Motor neuron (in vitro differentiated cells): ENCODE measurements at regions of chr17 and their contacts with region 1.

Region 1: GRCh38 chr17:10513299-10514067 is 4.9 kb downstream of the MYH1 start:
- ATAC-seq: no peak
- H3K4me3 ChIP-seq: no peak overlapping the region
- H3K27ac ChIP-seq: no peak overlapping the region
- H3K4me1 ChIP-seq: no peaks in the 10 kb centered on the region

Region 2: GRCh38 chr17:10305398-10305797 is 208.1 kb before region 1 on chr17:
- in situ Hi-C with region 1: no loop called
- ATAC-seq: peak in 2 of 8 experiments; percentile 7 to 8
- H3K4me3 ChIP-seq: no peak overlapping the region
- H3K27ac ChIP-seq: no peak overlapping the region
- H3K4me1 ChIP-seq: no peaks in the 10 kb centered on the region

Region 3: DNA sequence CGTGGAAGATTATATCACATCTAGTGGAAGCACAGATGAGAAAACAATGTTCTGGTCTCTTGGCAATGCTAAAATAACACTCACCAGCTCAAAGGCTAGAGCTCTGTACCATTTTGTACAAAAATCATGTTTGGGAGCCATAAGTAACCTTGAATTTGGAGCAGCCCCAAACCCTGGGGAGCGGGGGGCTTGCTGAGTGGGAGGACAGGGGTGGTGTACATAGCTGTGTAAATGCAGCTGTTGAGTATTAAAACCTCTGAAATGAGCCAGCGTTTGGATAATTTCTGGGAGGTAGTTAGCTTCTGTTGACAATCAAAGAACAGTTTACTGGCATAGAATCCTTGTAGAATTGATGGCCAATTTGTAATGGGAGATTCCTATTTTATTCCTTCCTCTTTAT is 96.1 kb before region 1 on chr17:
- in situ Hi-C with region 1: loop called in 1 of 9 experiments (anchors 25 kb)
- ATAC-seq: no peak
- H3K4me3 ChIP-seq: no peak overlapping the region
- H3K27ac ChIP-seq: no peak overlapping the region
- H3K4me1 ChIP-seq: no peaks in the 10 kb centered on the region